MCF 10A (cell line): ENCODE measurements at regions of chr1 and their contacts with region 1.

Region 1: GRCh38 chr1:244735404-244735803 is 82.5 kb downstream of the DESI2 start:
- DNase-seq: peak; percentile 66
- H3K4me3 Mint-ChIP-seq: no peak overlapping the region
- H3K27ac Mint-ChIP-seq: peak overlapping the region; percentile 92
- H3K4me1 Mint-ChIP-seq: peaks cover 23% of the 10 kb centered on the region
- H3K27me3 Mint-ChIP-seq: no peaks in the 10 kb centered on the region
- CTCF ChIP-seq: no peak

Region 2: GRCh38 chr1:244778361-244778760 is 43.0 kb after region 1 on chr1:
- CTCF ChIA-PET with region 1: interaction called, 4 read pairs
- POLR2A ChIA-PET with region 1: interaction called, 11 read pairs
- intact Hi-C with region 1: no loop called
- DNase-seq: peak; percentile 92
- H3K4me3 Mint-ChIP-seq: no peak overlapping the region
- H3K27ac Mint-ChIP-seq: no peak overlapping the region
- H3K4me1 Mint-ChIP-seq: peaks cover 9% of the 10 kb centered on the region
- H3K27me3 Mint-ChIP-seq: no peaks in the 10 kb centered on the region
- CTCF ChIP-seq: no peak

Region 3: DNA sequence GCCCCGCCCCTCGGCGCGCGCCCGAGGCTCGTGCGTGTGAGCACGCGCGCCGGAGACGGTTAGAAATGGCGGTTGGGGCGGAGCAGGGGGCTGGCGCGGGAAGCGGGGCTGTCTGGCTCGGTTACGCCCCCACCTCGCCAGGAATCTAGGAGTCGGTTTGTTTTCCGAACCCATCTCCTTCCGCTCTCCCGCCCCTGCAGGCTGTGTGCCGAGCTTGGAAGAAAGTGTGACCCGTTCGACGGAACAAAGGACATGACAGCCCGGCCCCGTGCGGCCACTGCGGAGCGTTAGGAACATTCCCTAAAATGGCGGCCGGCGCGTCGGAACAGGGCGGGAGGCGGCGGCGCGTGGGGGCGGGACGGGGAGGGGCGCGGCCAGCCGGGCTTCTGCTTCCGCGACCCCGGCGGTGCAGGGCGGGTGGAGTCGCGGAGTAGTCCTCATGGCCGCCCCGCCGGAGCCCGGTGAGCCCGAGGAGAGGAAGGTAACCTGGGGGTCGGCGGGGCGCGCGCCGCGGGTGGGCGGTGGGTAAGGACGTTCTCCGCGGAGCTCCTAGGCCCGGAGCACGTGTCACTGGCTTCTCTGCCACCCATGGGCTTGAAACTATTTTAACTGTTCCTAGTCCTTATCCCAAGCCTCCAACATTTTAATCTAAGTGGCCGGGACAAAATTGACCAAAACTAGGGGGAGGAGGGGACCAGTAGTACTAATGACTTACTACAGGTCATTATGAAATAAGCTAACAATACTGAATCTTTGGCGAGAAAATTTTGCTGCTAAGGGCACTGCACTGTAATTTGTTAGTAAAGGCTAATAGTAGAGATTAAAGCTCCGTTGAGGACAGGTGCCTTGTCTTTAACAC is 100.1 kb after region 1 on chr1 and contains the start of gene COX20:
- CTCF ChIA-PET with region 1: interaction called, 3 read pairs
- POLR2A ChIA-PET with region 1: interaction called, 17 read pairs
- intact Hi-C with region 1: no loop called
- DNase-seq: peak; percentile 98
- H3K4me3 Mint-ChIP-seq: peak within 1 kb of the TSS; percentile 81
- H3K27ac Mint-ChIP-seq: peak within 1 kb of the TSS; percentile 99
- H3K4me1 Mint-ChIP-seq: peaks cover 33% of the 10 kb centered on the region
- H3K27me3 Mint-ChIP-seq: no peaks in the 10 kb centered on the region
- CTCF ChIP-seq: no peak
- total RNA-seq, gene COX20: 44.6 and 46.1 TPM in 2 replicates